Mucosa of descending colon (tissue), 3 donors: ENCODE measurements at regions of chr7 and their contacts with region 1.

Region 1: GRCh38 chr7:43582503-43583423 is at the start of gene STK17A:
- DNase-seq: peak; percentile 89 to 96 (median 96)
- ATAC-seq: peak; percentile 97
- H3K4me3 ChIP-seq: peak within 1 kb of the TSS; percentile 97
- H3K4me1 ChIP-seq: peaks cover 19% of the 10 kb centered on the region
- CTCF ChIP-seq: peak; percentile 99
- total RNA-seq, gene STK17A: 17.9 to 30.0 (median 19.5) TPM

Region 2: GRCh38 chr7:43700059-43700501 is 117.3 kb after region 1 on chr7:
- intact Hi-C with region 1: loop called (anchors 5 kb)
- DNase-seq: no peak
- ATAC-seq: peak; percentile 76
- H3K4me3 ChIP-seq: no peak overlapping the region
- H3K4me1 ChIP-seq: no peaks in the 10 kb centered on the region
- CTCF ChIP-seq: no peak

Region 3: GRCh38 chr7:43834463-43835251 is 251.9 kb after region 1 on chr7:
- intact Hi-C with region 1: loop called (anchors 5 to 10 kb)
- DNase-seq: peak in 1 of 3 donors; percentile 18
- ATAC-seq: peak; percentile 60
- H3K4me3 ChIP-seq: no peak overlapping the region
- H3K4me1 ChIP-seq: no peaks in the 10 kb centered on the region
- CTCF ChIP-seq: no peak